Transverse colon (tissue), 4 donors: ENCODE measurements at regions of chr19 and their contacts with region 1.

Region 1: DNA sequence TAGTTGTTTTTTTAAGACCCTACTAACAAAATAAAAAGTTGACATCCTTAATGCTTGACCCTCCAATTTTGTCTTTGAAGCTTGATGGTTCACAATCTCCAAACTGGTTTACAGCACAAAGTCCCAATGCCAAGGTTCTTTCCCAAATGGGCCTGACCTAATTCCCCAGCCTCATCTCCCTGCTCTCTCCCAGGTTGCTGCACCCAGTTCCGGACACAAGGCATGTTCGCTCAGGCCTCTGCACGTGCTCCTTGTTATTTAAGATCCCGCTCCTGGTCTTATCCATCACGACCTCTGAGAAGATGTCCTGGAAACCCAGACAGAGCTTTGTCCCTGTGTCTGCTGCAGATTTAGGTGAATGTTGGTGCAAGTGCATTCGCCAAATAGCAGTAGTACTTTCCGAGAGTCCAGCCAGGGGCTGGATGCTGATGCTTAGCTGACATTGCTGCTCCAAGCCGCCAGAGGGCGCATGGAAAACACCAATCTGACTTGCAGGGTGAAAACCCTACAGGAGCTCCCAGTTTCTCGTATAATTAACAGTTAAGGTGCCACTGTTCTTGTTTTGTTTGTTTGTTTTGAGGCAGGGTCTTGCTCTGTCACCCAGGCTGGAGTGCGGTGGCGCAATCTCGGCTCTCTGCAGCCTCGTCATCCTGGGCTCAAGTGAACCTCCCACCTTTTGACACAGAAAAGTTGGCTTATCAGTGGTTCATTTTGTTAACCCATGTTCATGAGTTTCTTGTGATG is 18.5 kb downstream of the LYPD3 start:
- DNase-seq: peak; percentile 81
- H3K4me3 ChIP-seq: no peak overlapping the region
- H3K27ac ChIP-seq: no peak overlapping the region
- H3K4me1 ChIP-seq: no peaks in the 10 kb centered on the region
- H3K27me3 ChIP-seq: no peaks in the 10 kb centered on the region
- CTCF ChIP-seq: peak; percentile 94 to 96 (median 95)
- EP300 ChIP-seq: no peak
- POLR2A ChIP-seq: no peak

Region 2: GRCh38 chr19:43489310-43489709 is 42.4 kb after region 1 on chr19:
- in situ Hi-C with region 1: no loop called
- intact Hi-C with region 1: no loop called
- DNase-seq: no peak
- H3K4me3 ChIP-seq: no peak overlapping the region
- H3K27ac ChIP-seq: no peak overlapping the region
- H3K4me1 ChIP-seq: no peaks in the 10 kb centered on the region
- H3K27me3 ChIP-seq: no peaks in the 10 kb centered on the region
- CTCF ChIP-seq: no peak
- EP300 ChIP-seq: no peak
- POLR2A ChIP-seq: no peak

Region 3: GRCh38 chr19:43519436-43520088 is 72.6 kb after region 1 on chr19:
- in situ Hi-C with region 1: loop called (anchors 5 to 10 kb)
- intact Hi-C with region 1: loop called (anchors 1 kb)
- DNase-seq: peak; percentile 82
- H3K4me3 ChIP-seq: no peak overlapping the region
- H3K27ac ChIP-seq: no peak overlapping the region
- H3K4me1 ChIP-seq: peaks cover 0 to 43% (median 11%) of the 10 kb centered on the region in 4 donors
- H3K27me3 ChIP-seq: no peaks in the 10 kb centered on the region
- CTCF ChIP-seq: peak; percentile 87 to 92 (median 89)
- EP300 ChIP-seq: no peak
- POLR2A ChIP-seq: peak; percentile 16

Region 4: DNA sequence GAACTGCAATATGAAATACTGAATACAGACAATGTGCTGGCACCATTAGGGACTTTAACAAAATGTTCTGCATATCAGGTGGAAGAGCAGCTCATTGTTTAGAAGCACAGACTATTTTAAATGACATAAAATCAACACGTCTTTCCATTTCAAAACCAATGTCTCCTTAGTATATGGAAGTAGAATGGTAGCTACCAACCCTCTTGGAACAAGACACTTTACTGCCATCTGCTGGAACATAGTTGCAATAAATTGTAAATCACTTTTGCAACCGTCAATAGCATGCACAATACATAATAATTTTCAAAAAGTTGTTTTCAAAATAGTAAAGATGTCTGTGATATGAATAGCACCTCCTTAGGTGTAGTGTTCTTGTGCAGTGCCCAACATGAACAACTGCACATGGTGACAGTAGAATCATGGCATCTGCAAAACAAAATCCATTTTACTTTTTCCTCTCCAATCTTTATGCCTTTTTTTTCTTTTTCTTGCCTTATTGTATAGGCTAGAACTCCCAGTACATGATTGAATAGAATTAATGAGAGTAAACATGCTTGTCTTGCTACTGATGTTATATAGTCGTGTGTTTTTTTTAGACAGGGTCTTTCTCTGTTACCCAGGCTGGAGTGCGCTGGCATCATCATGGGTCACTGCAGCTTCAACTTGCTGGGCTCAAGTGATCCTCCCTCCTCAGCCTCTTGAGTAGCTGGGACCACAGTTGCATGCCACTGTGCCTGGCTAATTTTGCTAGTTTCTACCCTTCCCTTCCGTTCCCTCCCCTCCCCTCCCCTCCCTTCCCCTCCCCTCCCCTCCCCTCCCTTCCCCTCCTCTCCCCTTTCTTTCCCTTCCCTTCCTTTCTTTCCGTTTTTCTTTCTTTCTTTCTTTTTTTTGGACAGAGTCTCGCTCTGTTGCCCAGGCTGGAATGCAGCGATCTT is 363.1 kb after region 1 on chr19:
- in situ Hi-C with region 1: loop called in 1 of 4 experiments (anchors 25 kb)
- intact Hi-C with region 1: no loop called
- DNase-seq: no peak
- H3K4me3 ChIP-seq: no peak overlapping the region
- H3K27ac ChIP-seq: no peak overlapping the region
- H3K4me1 ChIP-seq: no peaks in the 10 kb centered on the region
- H3K27me3 ChIP-seq: no peaks in the 10 kb centered on the region
- CTCF ChIP-seq: peak; percentile 47 to 58 (median 57)
- EP300 ChIP-seq: no peak
- POLR2A ChIP-seq: no peak